KBM-7 (cell line): ENCODE measurements at regions of chr3 and their contacts with region 1.

Region 1: DNA sequence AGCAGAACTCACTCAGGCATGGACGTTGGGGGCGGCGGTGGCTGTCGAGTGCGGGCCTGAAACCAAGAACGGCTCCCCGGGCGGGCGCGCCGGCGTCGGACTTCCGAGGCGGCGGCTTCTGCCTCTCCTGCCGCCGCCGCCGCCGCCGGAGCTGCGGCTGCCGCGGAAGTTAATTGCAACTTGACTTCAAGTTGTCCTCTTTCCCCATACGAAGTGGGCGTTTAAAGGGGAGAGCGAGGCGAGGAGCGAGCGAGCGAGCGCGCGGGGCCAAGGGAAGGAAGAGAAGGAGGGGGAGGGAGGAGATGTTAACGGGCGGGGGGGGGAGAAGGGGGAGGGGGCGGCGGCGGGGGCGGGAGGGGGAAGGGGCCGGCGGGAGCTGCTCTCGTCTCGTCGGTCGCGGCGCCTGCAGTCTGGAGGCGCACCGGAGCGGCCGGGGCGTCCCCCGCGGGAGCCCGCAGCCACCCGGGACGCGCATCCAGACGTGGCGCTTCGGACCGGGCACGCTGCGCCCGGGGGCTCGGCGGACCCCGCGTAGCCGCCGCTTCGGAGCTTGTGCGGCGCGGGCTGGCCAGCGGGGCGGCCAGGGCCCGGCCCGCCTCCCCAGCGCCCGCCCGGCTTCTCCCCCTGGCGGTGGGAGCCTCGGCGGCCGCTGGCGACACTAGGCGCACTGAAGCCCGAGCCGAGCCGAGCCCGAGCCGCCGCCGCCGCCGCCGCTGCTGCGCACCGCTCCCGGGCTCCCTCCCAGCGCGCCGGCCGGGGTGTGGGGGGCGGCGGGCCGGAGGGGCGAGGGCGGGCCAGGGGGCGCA is 19.7 kb upstream of the SATB1 start:
- DNase-seq: peak; percentile 83

Region 2: GRCh38 chr3:17678116-17678741 is 766.6 kb before region 1 on chr3:
- in situ Hi-C with region 1: no loop called
- DNase-seq: no peak

Region 3: GRCh38 chr3:18580268-18580667 is 135.5 kb after region 1 on chr3:
- in situ Hi-C with region 1: no loop called
- DNase-seq: no peak

Region 4: DNA sequence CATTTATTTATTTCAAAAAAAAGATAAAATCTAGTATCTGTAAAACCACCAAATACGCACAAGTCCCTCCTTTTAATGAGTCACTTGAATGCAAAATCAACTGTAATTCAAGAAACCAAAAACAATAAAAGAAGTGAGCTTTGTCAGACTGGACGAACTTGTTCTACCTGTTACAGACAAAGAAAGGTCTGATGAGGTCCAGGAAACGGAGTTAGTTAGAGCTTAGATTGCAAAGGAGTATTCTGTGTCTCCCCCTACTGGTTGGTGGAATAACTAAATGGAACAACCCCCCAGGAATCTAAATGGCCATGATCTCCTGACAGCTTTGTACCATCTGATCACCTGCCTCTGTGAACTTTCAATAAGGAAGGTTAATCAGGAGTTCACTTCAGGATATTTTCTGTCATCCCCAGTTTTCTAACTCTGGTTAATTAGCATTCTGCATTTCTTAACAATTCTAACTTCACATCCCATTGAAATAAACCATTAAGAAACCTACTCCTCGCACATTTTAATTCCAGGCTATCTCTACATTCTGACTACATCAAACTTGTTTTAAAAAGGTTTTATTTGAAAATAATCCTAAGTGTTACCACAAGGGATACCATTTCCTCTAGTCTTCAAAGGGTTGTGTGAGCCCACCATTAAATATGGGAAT is 313.4 kb after region 1 on chr3:
- in situ Hi-C with region 1: loop called (anchors 25 kb)
- DNase-seq: peak; percentile 87